ENCODE measurements at regions of chr11 and their contacts with region 1.

Region 1: DNA sequence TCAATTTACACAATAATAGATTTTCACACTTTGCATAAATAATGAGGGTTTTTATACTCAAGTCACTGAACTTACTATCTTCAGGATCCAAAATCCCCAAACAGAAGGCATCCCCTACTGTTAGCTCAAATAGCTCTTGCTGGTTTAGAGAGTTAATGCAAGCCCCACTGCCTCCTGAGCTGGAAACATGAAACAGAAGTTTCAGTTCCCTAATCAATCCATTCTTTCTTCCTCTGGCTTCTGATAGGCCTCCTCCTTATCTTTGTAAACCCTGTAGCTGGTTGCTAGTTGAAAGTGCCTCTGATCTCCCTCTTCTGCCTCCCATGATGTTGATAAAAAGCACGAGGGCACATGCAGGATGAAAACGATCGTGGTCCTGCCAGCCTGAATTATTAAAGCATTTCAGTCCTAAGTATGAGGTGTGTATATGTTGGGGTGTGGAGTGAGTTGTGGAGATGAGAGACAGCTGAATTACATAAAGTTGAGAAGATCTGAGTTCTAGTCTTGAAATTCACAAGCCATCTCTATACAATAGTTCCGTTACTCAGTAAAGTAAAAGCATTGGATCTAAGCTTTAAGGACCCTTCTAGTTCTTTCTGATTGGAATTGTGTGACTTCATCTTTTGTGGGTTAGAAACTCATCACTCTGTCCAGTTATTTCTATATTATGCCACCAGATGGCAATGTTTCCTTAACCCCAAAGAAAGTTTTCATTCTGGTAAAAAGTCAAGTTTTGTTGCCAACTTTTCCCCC is 35.0 kb upstream of the EHF start:
- DNase-seq: no peak
- ATAC-seq: peak; percentile 75
- H3K4me3 Mint-ChIP-seq: no peak overlapping the region
- H3K27ac Mint-ChIP-seq: no peak overlapping the region
- H3K4me1 Mint-ChIP-seq: peaks cover 8% of the 10 kb centered on the region
- H3K27me3 Mint-ChIP-seq: no peaks in the 10 kb centered on the region
- CTCF ChIP-seq: peak; percentile 33; the same call in 1 of the 2 replicates

Region 2: GRCh38 chr11:34274723-34275401 is 311.0 kb before region 1 on chr11:
- CTCF ChIA-PET with region 1: no interaction called
- POLR2A ChIA-PET with region 1: no interaction called
- DNase-seq: no peak
- ATAC-seq: peak; percentile 34
- H3K4me3 Mint-ChIP-seq: no peak overlapping the region
- H3K27ac Mint-ChIP-seq: no peak overlapping the region; the same call in 1 of the 2 replicates
- H3K4me1 Mint-ChIP-seq: peaks cover 24% of the 10 kb centered on the region
- H3K27me3 Mint-ChIP-seq: no peaks in the 10 kb centered on the region
- CTCF ChIP-seq: no peak

Region 3: GRCh38 chr11:34609850-34610249 is 23.9 kb after region 1 on chr11:
- CTCF ChIA-PET with region 1: no interaction called
- POLR2A ChIA-PET with region 1: no interaction called
- DNase-seq: no peak
- ATAC-seq: no peak
- H3K4me3 Mint-ChIP-seq: no peak overlapping the region
- H3K27ac Mint-ChIP-seq: no peak overlapping the region
- H3K4me1 Mint-ChIP-seq: peaks cover 10% of the 10 kb centered on the region
- H3K27me3 Mint-ChIP-seq: no peaks in the 10 kb centered on the region; the same call in 1 of the 2 replicates
- CTCF ChIP-seq: no peak

Region 4: GRCh38 chr11:34653826-34654490 is 68.0 kb after region 1 on chr11:
- CTCF ChIA-PET with region 1: no interaction called
- POLR2A ChIA-PET with region 1: no interaction called
- DNase-seq: no peak
- ATAC-seq: no peak; the same call in 1 of the 2 replicates
- H3K4me3 Mint-ChIP-seq: no peak overlapping the region
- H3K27ac Mint-ChIP-seq: 0 out of 2 replicates have a peak overlapping the region, but pooled peaks have one; percentile 5
- H3K4me1 Mint-ChIP-seq: peaks cover 57% of the 10 kb centered on the region
- H3K27me3 Mint-ChIP-seq: peaks cover 6% of the 10 kb centered on the region
- CTCF ChIP-seq: no peak

Region 5: DNA sequence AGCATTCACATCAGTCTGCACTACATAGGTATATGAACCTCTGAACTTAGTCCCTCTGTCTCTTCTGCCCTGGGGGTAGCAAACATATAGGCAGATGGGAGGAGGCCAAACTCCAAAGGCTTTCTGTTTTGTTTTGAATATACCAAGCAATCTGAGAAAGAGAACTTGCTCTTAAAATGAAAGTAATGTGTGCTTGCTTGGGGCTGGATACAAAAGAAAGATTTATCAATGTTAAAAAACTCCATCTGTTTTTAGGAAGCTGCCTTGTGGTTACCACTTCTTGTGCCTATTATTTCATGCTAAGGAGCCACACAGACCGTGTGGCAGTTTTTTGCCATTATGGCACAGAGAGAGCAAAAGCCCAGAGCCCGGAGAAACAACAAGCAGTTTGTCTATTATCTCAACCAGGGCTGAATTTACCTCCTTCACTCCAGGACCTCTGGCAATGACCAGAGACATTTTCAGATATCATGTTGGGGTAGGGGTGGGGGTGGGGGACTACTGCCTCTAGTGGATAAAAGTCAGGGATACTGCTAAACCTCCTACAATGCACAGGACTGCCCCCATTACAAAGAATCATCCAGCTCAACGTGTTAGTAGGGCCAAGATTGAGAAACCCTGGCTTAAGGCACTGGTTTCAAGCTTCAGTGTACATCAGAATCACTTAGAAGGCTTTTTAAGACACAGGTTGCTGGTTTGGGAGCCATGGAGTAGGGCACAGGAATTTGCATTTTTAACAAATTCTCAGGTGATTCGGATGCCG is 206.1 kb after region 1 on chr11:
- CTCF ChIA-PET with region 1: interaction called, 12 read pairs
- POLR2A ChIA-PET with region 1: no interaction called
- DNase-seq: no peak
- ATAC-seq: peak; percentile 72
- H3K4me3 Mint-ChIP-seq: no peak overlapping the region
- H3K27ac Mint-ChIP-seq: no peak overlapping the region
- H3K4me1 Mint-ChIP-seq: peaks cover 34% of the 10 kb centered on the region
- H3K27me3 Mint-ChIP-seq: no peaks in the 10 kb centered on the region; the same call in 1 of the 2 replicates
- CTCF ChIP-seq: no peak

Region 6: GRCh38 chr11:34830648-34831047 is 244.7 kb after region 1 on chr11:
- CTCF ChIA-PET with region 1: no interaction called
- POLR2A ChIA-PET with region 1: no interaction called
- DNase-seq: no peak
- ATAC-seq: no peak
- H3K4me3 Mint-ChIP-seq: no peak overlapping the region
- H3K27ac Mint-ChIP-seq: no peak overlapping the region
- H3K4me1 Mint-ChIP-seq: peaks cover 19% of the 10 kb centered on the region
- H3K27me3 Mint-ChIP-seq: no peaks in the 10 kb centered on the region
- CTCF ChIP-seq: no peak

Region 7: DNA sequence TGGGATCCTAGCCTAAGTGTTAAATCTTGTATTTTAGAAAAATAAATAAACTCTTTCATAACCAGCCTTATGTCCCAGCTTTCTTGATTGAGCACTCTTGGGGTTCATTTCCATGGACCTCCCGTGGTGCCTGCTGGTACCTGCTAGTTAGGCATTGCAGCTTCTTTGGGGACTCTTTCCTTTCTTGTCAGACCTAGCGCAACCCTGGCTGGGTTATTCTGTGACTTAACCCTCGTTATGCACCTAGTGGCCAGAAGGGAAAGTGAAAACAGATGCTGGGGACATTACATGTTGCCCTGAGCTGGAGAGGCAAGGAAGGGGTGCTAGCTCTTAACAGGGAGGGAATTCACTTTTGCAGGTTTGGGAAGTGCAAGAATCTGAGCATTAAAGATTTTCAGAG is 283.5 kb after region 1 on chr11:
- CTCF ChIA-PET with region 1: interaction called, 10 read pairs
- POLR2A ChIA-PET with region 1: no interaction called
- DNase-seq: peak; percentile 18
- ATAC-seq: peak; percentile 95
- H3K4me3 Mint-ChIP-seq: no peak overlapping the region
- H3K27ac Mint-ChIP-seq: no peak overlapping the region
- H3K4me1 Mint-ChIP-seq: peaks cover 4% of the 10 kb centered on the region; the same call in 1 of the 2 replicates
- H3K27me3 Mint-ChIP-seq: no peaks in the 10 kb centered on the region
- CTCF ChIP-seq: peak; percentile 37; the same call in 1 of the 2 replicates

Region 8: GRCh38 chr11:34899633-34900016 is 313.7 kb after region 1 on chr11:
- CTCF ChIA-PET with region 1: interaction called, 12 read pairs
- POLR2A ChIA-PET with region 1: no interaction called
- DNase-seq: peak; percentile 14
- ATAC-seq: no peak
- H3K4me3 Mint-ChIP-seq: no peak overlapping the region
- H3K27ac Mint-ChIP-seq: no peak overlapping the region
- H3K4me1 Mint-ChIP-seq: peaks cover 4% of the 10 kb centered on the region
- H3K27me3 Mint-ChIP-seq: peaks cover 3% of the 10 kb centered on the region
- CTCF ChIP-seq: no peak

Measured in WTC11 (cell line).